ENCODE measurements at regions of chr17 and their contacts with region 1.

Region 1: GRCh38 chr17:21098934-21099689 is 27.7 kb upstream of the DHRS7B start:
- DNase-seq: peak; percentile 90 to 92
- H3K4me3 ChIP-seq: peak overlapping the region; percentile 59
- H3K4me3 Mint-ChIP-seq: peak overlapping the region; percentile 92
- H3K27ac Mint-ChIP-seq: peak overlapping the region; percentile 99
- H3K4me1 ChIP-seq: peaks cover 7% of the 10 kb centered on the region
- H3K4me1 Mint-ChIP-seq: peaks cover 10% of the 10 kb centered on the region
- H3K27me3 ChIP-seq: no peaks in the 10 kb centered on the region
- H3K27me3 Mint-ChIP-seq: no peaks in the 10 kb centered on the region
- CTCF ChIP-seq: no peak

Region 2: DNA sequence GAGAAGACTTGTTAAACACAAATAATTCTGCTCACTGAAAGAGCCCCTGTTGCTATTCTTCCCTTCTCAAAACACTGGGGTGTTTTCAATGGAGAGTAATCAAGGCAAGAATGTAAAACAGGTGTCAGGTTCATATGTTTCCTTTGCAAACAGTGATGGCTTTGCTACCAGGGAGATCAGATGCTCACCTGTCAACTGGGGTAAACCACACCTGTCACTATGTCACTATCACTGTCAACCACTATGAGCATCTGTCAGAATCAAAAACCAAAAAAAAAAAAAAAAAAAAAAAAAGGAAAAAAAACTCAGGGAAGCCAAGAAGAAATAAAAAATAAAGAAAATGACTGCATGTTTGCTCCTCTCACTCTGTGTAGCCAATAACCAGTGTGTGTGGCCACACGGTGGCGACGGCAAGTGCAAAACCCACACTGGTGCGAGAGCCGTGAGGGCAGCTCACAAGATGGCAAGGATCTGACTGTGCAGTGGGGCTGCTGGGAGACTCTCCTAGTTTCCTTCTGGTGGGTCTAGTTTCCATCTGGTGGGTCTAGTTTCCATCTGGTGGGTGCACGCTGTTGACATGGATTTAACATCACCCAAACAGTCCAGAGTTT is 79.0 kb before region 1 on chr17:
- CTCF ChIA-PET with region 1: interaction called, 9 read pairs
- POLR2A ChIA-PET with region 1: no interaction called
- intact Hi-C with region 1: loop called (anchors 5 kb)
- DNase-seq: peak in 1 of 2 experiments; percentile 66
- H3K4me3 ChIP-seq: no peak overlapping the region
- H3K4me3 Mint-ChIP-seq: no peak overlapping the region
- H3K27ac Mint-ChIP-seq: no peak overlapping the region
- H3K4me1 ChIP-seq: no peaks in the 10 kb centered on the region
- H3K4me1 Mint-ChIP-seq: peaks cover 7% of the 10 kb centered on the region
- H3K27me3 ChIP-seq: no peaks in the 10 kb centered on the region
- H3K27me3 Mint-ChIP-seq: no peaks in the 10 kb centered on the region
- CTCF ChIP-seq: peak in 1 of 2 experiments; percentile 50

Region 3: DNA sequence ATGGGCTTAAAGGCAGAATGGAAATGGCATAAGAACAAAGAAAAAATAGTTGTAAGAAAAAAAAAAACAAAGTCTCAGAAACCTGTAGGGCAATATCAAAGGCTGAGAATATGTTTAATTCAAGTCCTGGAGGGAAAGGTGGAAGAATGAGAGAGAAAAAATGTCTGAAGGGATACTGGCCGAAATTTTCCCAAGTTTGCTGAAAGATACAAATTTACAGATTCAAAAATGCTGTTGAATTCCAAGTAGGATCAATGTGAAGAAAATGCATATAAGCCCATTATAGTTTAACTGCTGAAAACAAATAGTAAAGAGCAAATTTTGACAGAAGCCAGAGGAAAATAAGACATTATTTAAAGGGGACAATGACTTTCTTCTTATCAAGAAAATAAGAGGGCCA is 49.7 kb before region 1 on chr17:
- CTCF ChIA-PET with region 1: interaction called, 19 read pairs
- POLR2A ChIA-PET with region 1: interaction called, 39 read pairs
- intact Hi-C with region 1: loop called (anchors 1 kb)
- DNase-seq: no peak
- H3K4me3 ChIP-seq: no peak overlapping the region
- H3K4me3 Mint-ChIP-seq: no peak overlapping the region
- H3K27ac Mint-ChIP-seq: no peak overlapping the region
- H3K4me1 ChIP-seq: peaks cover 15% of the 10 kb centered on the region
- H3K4me1 Mint-ChIP-seq: peaks cover 15% of the 10 kb centered on the region
- H3K27me3 ChIP-seq: no peaks in the 10 kb centered on the region
- H3K27me3 Mint-ChIP-seq: no peaks in the 10 kb centered on the region
- CTCF ChIP-seq: no peak

Region 4: DNA sequence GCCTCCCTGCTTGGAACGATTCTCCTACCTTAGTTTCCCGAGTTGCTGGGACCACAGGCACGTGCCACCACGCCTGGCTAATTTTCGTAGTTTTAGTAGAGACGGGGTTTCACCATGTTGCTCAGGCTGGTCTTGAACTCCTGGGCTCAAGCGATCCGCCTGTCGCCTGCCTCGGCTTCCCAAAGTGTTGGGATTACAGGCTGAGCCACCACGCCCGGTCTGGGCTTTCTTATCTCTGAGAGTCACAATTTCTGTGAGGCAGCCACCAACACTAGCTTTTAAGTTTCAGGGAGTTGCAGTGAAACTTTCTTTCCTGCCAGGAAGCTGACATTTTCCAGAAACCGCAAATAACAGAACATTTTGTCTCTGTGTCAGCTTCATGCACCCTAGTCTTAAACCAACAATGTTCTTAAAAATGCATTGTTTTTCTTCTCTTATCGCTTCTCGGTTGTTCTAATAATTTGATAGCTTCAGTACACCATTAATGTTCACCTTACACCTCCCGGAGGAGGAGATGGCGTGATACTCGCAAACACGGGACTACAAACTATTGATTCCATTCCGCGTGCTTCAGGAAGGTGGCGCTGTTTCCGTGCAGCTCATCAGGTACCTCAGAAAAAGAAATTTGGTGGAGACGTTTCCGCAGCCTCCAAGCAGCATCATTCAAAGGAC is 20.3 kb after region 1 on chr17:
- CTCF ChIA-PET with region 1: interaction called, 14 read pairs
- POLR2A ChIA-PET with region 1: no interaction called
- intact Hi-C with region 1: no loop called
- DNase-seq: peak; percentile 69 to 75
- H3K4me3 ChIP-seq: no peak overlapping the region; the same call in 1 of the 2 replicates
- H3K4me3 Mint-ChIP-seq: peak overlapping the region; percentile 22
- H3K27ac Mint-ChIP-seq: no peak overlapping the region
- H3K4me1 ChIP-seq: peaks cover 7% of the 10 kb centered on the region; the same call in 1 of the 2 replicates
- H3K4me1 Mint-ChIP-seq: peaks cover 4% of the 10 kb centered on the region
- H3K27me3 ChIP-seq: no peaks in the 10 kb centered on the region
- H3K27me3 Mint-ChIP-seq: no peaks in the 10 kb centered on the region
- CTCF ChIP-seq: peak; percentile 90 to 97

Region 5: GRCh38 chr17:21149621-21150020 is 50.5 kb after region 1 on chr17:
- CTCF ChIA-PET with region 1: no interaction called
- POLR2A ChIA-PET with region 1: no interaction called
- intact Hi-C with region 1: no loop called
- DNase-seq: no peak
- H3K4me3 ChIP-seq: no peak overlapping the region
- H3K4me3 Mint-ChIP-seq: no peak overlapping the region
- H3K27ac Mint-ChIP-seq: no peak overlapping the region
- H3K4me1 ChIP-seq: no peaks in the 10 kb centered on the region
- H3K4me1 Mint-ChIP-seq: no peaks in the 10 kb centered on the region
- H3K27me3 ChIP-seq: no peaks in the 10 kb centered on the region
- H3K27me3 Mint-ChIP-seq: no peaks in the 10 kb centered on the region
- CTCF ChIP-seq: no peak

Measured in Caco-2 (cell line).